Activated CD8-positive, alpha-beta T cell treated with anti-CD3 and anti-CD28 coated beads, Interleukin-2, amount 10 ng/mL, durations not matched to agents 7 days and 5 days (primary cell): ENCODE measurements at regions of chr14 and their contacts with region 1.

Region 1: GRCh38 chr14:24058260-24058950 is 6.6 kb downstream of the CARMIL3 start:
- DNase-seq: peak; percentile 81
- ATAC-seq: peak; percentile 75
- H3K4me3 Mint-ChIP-seq: no peak overlapping the region
- H3K27ac Mint-ChIP-seq: peak overlapping the region; percentile 72
- H3K4me1 Mint-ChIP-seq: peaks cover 10% of the 10 kb centered on the region
- H3K27me3 Mint-ChIP-seq: peaks cover 5% of the 10 kb centered on the region

Region 2: GRCh38 chr14:23933108-23933741 is 125.2 kb before region 1 on chr14:
- CTCF ChIA-PET with region 1: no interaction called
- POLR2A ChIA-PET with region 1: no interaction called
- DNase-seq: no peak
- ATAC-seq: no peak
- H3K4me3 Mint-ChIP-seq: no peak overlapping the region
- H3K27ac Mint-ChIP-seq: no peak overlapping the region
- H3K4me1 Mint-ChIP-seq: no peaks in the 10 kb centered on the region
- H3K27me3 Mint-ChIP-seq: peaks cover 4% of the 10 kb centered on the region

Region 3: DNA sequence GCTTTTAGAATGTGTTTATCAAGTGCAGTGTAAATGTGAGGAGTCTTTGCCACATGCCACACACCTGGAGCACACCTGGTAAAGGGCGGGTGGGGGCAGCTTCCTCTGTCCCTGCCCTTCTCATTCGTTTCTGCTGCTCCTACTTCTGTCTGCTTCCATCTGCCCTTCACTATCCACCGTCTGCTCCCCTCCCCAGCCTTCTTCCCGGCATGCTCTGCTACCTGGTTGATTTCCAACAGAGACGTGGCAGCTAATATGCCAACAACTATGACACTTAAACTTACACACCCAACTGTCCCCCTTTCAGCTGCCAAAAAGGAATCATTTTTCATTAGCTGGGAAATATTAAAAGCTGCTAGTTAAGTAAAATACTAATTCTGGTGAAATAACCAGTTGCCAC is 15.7 kb before region 1 on chr14:
- CTCF ChIA-PET with region 1: interaction called, 16 read pairs
- POLR2A ChIA-PET with region 1: no interaction called
- DNase-seq: no peak
- ATAC-seq: no peak
- H3K4me3 Mint-ChIP-seq: no peak overlapping the region
- H3K27ac Mint-ChIP-seq: no peak overlapping the region
- H3K4me1 Mint-ChIP-seq: peaks cover 24% of the 10 kb centered on the region
- H3K27me3 Mint-ChIP-seq: peaks cover 23% of the 10 kb centered on the region

Region 4: GRCh38 chr14:24080888-24081738 is 22.7 kb after region 1 on chr14:
- CTCF ChIA-PET with region 1: interaction called, 74 read pairs
- POLR2A ChIA-PET with region 1: interaction called, 5 read pairs
- DNase-seq: peak; percentile 89
- ATAC-seq: peak; percentile 94
- H3K4me3 Mint-ChIP-seq: peak overlapping the region; percentile 76
- H3K27ac Mint-ChIP-seq: peak overlapping the region; percentile 86
- H3K4me1 Mint-ChIP-seq: peaks cover 33% of the 10 kb centered on the region
- H3K27me3 Mint-ChIP-seq: no peaks in the 10 kb centered on the region

Region 5: DNA sequence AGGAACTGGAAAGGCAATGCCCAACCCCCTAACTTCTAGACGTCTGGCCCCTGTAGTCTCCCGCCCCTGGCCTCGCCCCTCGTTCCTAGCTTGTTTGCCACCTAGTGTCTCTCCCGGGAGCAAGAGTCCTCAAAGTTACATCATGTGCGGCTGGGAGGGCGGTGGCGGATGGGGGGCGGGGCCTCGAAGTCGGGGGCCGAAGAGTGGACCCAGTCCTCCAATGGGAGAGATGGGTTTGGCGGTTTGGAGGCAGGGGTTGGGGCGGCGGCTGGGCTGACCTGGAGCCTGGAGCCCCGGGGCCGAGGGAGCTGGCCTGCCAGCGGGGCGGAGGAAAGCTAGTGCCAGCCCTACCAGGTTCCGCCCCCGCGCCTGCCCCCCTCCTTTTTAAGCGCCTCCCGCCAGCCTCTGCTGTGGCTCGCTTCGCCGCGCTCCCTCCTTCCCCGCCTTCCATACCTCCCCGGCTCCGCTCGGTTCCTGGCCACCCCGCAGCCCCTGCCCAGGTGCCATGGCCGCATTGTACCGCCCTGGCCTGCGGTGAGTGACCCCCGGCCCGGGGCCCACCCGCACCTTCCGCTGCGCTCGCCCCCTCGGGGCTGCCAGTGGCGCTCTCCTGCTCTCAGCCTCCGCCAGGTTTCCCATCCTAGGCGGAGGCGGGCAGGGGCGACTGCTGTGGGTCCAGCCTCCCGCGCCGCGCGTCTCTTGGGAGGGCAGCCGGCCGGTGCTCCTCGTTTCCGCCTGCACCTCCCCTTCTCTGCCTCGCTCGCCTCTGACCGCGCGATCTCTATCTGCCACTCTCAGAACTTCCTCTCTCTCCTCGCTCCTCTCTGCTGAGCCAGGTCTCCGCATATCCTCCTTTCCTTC is 35.7 kb after region 1 on chr14 and contains the start of gene PCK2:
- CTCF ChIA-PET with region 1: interaction called, 213 read pairs
- POLR2A ChIA-PET with region 1: interaction called, 30 read pairs
- DNase-seq: peak; percentile 84
- ATAC-seq: peak; percentile 80
- H3K4me3 Mint-ChIP-seq: peak within 1 kb of the TSS; percentile 100
- H3K27ac Mint-ChIP-seq: peak within 1 kb of the TSS; percentile 99
- H3K4me1 Mint-ChIP-seq: peaks cover 42% of the 10 kb centered on the region
- H3K27me3 Mint-ChIP-seq: no peaks in the 10 kb centered on the region
- total RNA-seq, gene PCK2: 49.6 to 54.9 TPM

Region 6: DNA sequence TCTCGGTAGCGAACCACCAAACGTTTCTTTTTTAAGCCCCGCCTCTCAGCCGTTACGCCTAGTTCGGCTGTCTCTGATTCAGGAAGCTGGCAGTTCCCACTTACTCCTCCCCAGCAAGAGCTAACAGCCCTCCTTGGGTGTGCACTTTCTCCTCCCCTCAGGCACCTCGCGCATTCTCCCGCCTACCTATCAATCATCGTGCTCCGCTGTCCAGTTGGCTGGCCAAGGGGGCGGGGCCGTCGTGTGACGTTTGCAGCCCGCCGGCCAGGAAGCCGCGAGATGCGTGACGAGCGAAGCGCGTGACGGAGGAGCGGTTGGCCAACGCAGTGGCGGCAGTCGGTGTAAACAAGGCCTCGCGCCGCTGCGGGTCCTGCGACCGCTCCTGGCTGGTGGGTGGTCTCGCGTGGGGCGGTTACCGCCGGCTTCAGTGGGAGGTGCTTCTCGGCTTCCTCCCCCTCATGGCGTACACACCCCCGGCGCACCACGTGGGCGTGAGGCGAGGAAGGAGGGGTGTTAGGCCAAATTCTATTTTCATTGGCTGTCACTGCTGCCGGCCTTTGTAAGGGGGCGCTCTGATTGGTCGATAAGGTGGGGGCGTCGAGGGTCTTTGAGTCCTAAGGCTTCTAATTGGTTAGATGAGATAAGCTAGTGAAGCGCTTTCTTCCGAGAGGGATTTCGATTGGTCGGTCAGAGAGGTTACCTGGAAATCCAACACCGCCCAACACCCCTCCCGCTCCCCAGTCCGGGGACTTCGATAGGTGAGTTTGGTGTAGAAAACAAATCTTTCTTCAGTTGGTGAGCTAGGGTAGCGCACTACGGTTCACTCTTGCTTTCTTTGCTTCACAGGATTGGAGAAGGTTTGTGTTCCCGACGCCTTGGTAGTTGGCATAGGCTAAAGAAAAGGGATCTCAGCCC is 56.4 kb after region 1 on chr14 and contains the starts of genes DCAF11 and NRL:
- CTCF ChIA-PET with region 1: interaction called, 210 read pairs
- POLR2A ChIA-PET with region 1: interaction called, 20 read pairs
- DNase-seq: peak; percentile 99
- ATAC-seq: peak; percentile 92
- H3K4me3 Mint-ChIP-seq: peak within 1 kb of the TSS; percentile 96
- H3K27ac Mint-ChIP-seq: peak within 1 kb of the TSS; percentile 99
- H3K4me1 Mint-ChIP-seq: peaks cover 38% of the 10 kb centered on the region
- H3K27me3 Mint-ChIP-seq: no peaks in the 10 kb centered on the region
- total RNA-seq, gene DCAF11: 101 to 107 TPM
- total RNA-seq, gene NRL: 2.8 to 3.4 TPM

Region 7: DNA sequence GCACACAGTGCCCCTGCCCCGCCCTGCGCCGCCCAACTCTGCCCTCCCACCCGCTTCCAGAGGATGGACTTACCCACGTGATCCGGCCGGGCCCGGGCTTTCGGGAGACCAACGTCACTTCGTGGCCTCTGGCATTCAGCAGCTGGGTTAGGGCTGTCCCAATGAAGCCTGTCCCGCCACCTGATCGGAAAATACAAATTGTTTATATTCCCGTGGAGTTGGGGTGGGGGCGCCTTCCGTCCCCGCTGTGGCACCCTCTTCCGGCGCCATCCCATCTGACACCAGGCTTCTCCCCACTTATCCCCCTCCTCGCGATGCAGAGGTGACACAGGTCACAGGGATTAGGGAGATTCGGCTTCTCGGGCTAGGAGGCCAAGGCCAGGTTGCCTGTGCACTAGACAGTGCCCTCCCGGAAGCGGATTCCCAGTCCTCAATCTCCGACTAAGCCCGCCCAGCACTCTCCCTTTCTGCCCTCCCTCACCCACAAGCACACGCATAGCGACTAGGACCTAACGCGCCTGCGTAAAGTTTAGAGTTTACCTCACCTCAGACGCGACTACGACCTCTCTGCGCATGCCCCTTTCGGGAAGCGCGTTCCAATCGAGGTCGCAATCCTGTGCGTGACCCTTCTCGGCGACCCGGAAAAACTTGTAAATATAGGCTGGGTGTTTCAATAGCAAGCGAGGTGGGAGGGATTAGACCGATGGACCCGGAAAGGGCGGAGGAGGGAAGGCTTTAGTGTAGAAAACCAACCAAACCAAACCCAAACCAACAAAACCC is 384.1 kb after region 1 on chr14 and contains the start of gene SDR39U1:
- CTCF ChIA-PET with region 1: no interaction called
- POLR2A ChIA-PET with region 1: no interaction called
- DNase-seq: peak; percentile 99
- ATAC-seq: peak; percentile 91
- H3K4me3 Mint-ChIP-seq: peak within 1 kb of the TSS; percentile 96
- H3K27ac Mint-ChIP-seq: peak within 1 kb of the TSS; percentile 98
- H3K4me1 Mint-ChIP-seq: peaks cover 53% of the 10 kb centered on the region
- H3K27me3 Mint-ChIP-seq: no peaks in the 10 kb centered on the region
- total RNA-seq, gene SDR39U1: 47.6 to 58.6 TPM